ENCODE measurements at regions of chr1 and their contacts with region 1.

Region 1: DNA sequence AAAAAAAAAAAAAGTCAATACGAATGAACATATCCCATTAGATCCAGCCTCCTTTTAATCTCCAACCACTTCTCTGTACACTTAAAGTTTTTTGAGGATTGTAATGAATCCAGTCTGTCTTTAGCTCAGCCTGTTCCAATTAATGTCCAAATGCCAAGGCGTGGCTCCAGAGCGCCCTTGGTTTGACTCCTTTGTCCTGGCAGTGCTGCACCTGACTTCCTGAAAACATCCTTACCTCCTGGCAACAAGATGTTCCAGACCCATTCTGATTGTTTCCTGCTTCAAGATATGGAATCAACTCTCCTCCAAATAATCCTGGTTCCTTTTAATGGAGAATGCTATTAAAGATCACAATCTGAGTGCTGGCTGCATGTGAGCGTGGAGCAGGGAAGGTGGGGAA is 74.1 kb upstream of the FAM20B start:
- DNase-seq: no peak
- ATAC-seq: no peak
- H3K4me3 ChIP-seq: no peak overlapping the region
- H3K27ac ChIP-seq: no peak overlapping the region
- H3K4me1 ChIP-seq: peaks cover 72% of the 10 kb centered on the region
- H3K27me3 ChIP-seq: no peaks in the 10 kb centered on the region
- CTCF ChIP-seq: no peak
- EP300 ChIP-seq: no peak
- POLR2A ChIP-seq: no peak
- RAD21 ChIP-seq: no peak

Region 2: DNA sequence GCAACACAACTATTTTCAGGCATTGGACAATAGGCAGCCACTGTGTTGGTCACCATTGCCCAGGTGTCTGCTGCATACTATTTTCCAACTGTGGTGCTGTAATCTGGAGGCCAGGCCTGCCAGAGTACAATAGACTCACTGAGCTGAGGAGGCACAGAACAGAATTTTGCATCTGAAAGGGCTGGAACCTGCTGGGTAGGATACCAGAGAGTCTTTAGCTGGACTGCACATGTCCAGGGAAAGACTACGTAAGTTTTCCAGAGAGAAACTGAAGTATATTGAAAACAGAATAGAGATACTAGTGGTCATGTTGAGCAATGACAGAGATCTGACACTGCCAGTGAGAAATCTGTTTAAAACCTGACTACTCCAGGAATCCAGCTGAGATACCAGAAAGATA is 656.9 kb before region 1 on chr1:
- CTCF ChIA-PET with region 1: no interaction called
- POLR2A ChIA-PET with region 1: no interaction called
- in situ Hi-C with region 1: no loop called
- intact Hi-C with region 1: no loop called
- DNase-seq: no peak
- ATAC-seq: peak; percentile 56
- H3K4me3 ChIP-seq: no peak overlapping the region
- H3K27ac ChIP-seq: no peak overlapping the region
- H3K4me1 ChIP-seq: no peaks in the 10 kb centered on the region
- H3K27me3 ChIP-seq: no peaks in the 10 kb centered on the region
- CTCF ChIP-seq: no peak
- EP300 ChIP-seq: no peak
- POLR2A ChIP-seq: no peak
- RAD21 ChIP-seq: no peak

Region 3: GRCh38 chr1:178916448-178917174 is 35.0 kb before region 1 on chr1:
- CTCF ChIA-PET with region 1: no interaction called
- POLR2A ChIA-PET with region 1: no interaction called
- in situ Hi-C with region 1: no loop called
- intact Hi-C with region 1: loop called (anchors 2 kb)
- DNase-seq: peak; percentile 91
- ATAC-seq: peak; percentile 92
- H3K4me3 ChIP-seq: peak overlapping the region in 1 of 3 experiments; percentile 34; a peak in 1 of 6 replicates
- H3K27ac ChIP-seq: peak overlapping the region; percentile 65
- H3K4me1 ChIP-seq: peaks cover 71% of the 10 kb centered on the region
- H3K27me3 ChIP-seq: no peaks in the 10 kb centered on the region
- CTCF ChIP-seq: no peak
- EP300 ChIP-seq: peak in 1 of 2 experiments; percentile 80; a peak in 2 of 4 replicates
- POLR2A ChIP-seq: peak; percentile 39 to 62; a peak in 2 of 4 replicates
- RAD21 ChIP-seq: no peak